B cell (primary cell): ENCODE measurements at regions of chr11 and their contacts with region 1.

Region 1: DNA sequence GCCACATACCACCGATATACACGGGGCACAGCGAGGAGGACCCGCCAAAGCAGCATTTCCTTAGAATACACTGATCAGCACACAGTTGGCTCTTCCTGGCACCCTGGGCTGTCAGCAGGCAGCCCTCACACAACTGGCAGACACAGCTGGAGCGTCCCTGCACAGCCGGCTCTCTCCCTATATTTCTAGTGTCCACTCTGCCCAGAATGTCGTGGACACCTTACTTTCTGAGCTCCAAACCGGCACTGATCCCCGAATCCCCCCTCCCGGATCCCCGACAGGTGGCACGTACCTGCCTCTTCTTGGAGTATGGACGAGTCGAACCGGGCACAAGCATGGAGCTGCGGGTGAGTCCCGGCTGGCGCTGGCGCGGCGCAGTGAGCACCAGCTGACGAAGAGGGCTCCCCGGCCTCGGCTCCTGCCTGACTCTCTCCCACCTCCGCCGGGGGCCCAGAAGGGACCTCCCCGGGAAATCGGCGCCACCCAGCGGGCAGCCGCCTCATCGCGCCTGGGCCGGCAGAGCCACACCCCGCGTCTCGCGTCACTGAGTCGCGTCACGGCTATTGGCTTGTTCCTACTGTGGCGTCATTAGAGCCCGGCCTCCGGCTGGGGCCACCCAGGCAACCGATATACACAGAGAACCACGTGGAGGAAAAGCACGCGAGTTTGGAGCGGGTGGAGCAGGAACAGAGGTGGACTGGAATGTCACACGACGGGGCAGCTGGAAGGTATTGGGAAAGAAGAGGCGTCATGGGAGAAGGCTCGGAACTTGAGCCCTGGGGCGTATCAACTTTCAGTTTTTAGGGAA is at the start of gene USP2:
- DNase-seq: peak; percentile 97
- ATAC-seq: peak; percentile 99
- H3K4me3 ChIP-seq: peak within 1 kb of the TSS; percentile 51 to 72 (median 55)
- H3K4me3 Mint-ChIP-seq: no peak within 1 kb of the TSS
- H3K27ac ChIP-seq: peak within 1 kb of the TSS in 1 of 2 donors; percentile 64
- H3K27ac Mint-ChIP-seq: peak within 1 kb of the TSS; percentile 79
- H3K4me1 ChIP-seq: peaks cover 12 to 17% of the 10 kb centered on the region in 2 donors
- H3K4me1 Mint-ChIP-seq: peaks cover 6% of the 10 kb centered on the region
- H3K27me3 ChIP-seq: peaks cover 0 to 27% (median 16%) of the 10 kb centered on the region in 4 experiments
- H3K27me3 Mint-ChIP-seq: peaks cover 5% of the 10 kb centered on the region
- CTCF ChIP-seq: peak; percentile 90
- total RNA-seq, gene USP2: not detected in 2 replicates

Region 2: DNA sequence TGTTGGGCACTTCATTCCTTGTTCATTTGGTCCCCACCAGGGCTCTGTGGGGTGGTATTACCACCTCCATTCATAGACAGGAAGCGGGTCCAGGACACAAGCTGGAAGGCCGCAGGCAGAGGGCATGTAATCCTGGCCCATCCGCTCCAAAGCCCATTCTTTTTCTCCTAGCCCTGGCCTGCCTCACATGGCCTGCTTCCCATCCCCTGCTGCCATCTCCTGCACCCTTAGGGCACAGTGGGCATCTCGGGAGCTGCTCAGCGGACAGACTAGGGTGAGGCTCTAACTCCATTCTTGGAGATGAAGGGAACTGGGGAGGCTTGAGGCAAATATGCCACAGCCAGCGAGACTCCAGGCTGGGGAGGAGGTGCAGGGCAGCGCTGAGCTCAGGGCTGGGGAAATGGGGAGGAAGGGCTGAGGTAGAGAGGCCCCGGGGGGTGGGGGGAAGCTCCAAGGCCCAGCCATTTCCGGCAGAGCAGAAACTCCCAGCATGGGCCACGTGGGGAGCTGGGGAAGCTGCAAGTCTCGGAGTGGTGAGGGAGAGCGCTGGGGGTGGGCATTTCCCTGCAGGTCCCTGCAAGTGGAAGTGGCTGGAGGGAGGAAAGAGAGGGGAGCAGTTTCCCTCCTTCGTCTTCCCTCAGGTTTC is 441.3 kb before region 1 on chr11:
- CTCF ChIA-PET with region 1: no interaction called
- POLR2A ChIA-PET with region 1: no interaction called
- intact Hi-C with region 1: no loop called
- DNase-seq: peak; percentile 42
- ATAC-seq: peak; percentile 28
- H3K4me3 ChIP-seq: no peak overlapping the region
- H3K4me3 Mint-ChIP-seq: no peak overlapping the region
- H3K27ac ChIP-seq: no peak overlapping the region
- H3K27ac Mint-ChIP-seq: no peak overlapping the region
- H3K4me1 ChIP-seq: peaks cover 16 to 25% of the 10 kb centered on the region in 2 donors
- H3K4me1 Mint-ChIP-seq: peaks cover 32% of the 10 kb centered on the region
- H3K27me3 ChIP-seq: peaks cover 0 to 3% (median 0%) of the 10 kb centered on the region in 4 experiments
- H3K27me3 Mint-ChIP-seq: no peaks in the 10 kb centered on the region
- CTCF ChIP-seq: no peak

Region 3: DNA sequence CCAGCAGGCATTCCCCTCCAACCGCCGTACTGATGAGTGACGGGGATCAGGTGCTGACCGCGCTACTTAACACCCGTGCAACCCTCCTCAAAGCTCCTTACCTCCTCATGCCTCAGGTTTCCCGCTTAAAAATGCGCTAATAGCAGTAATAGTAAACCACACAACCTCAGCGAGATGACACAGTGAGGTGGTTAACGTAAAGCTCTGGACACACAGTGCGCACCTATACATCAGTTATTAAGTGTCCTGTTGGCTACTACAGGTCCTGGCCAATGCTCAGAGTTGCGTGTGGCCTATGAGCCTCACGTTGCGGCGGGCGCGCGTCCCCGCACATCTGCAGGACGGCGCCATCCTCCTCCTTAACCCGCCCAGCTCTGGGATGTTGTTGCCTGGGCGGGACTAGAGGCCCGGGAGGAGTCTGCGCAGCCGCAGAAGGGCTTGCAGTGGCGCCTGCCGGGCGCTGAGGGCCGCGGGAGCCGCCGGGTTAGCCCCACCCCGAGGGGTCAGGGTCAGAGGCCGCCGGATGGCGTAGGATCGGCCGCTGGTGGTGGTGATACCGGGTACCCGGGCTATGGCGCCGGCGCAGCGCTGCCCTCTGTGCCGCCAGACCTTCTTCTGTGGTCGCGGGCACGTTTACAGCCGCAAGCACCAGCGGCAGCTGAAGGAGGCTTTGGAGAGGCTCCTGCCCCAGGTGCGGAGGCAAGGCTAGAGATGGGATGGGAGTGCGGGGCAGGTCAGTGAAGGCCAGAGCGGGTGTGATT is 383.6 kb before region 1 on chr11 and contains the start of gene CENATAC:
- CTCF ChIA-PET with region 1: no interaction called
- POLR2A ChIA-PET with region 1: no interaction called
- intact Hi-C with region 1: no loop called
- DNase-seq: peak; percentile 94
- ATAC-seq: peak; percentile 95
- H3K4me3 ChIP-seq: peak within 1 kb of the TSS; percentile 76 to 90 (median 82)
- H3K4me3 Mint-ChIP-seq: peak within 1 kb of the TSS; percentile 99
- H3K27ac ChIP-seq: peak within 1 kb of the TSS; percentile 52 to 77
- H3K27ac Mint-ChIP-seq: peak within 1 kb of the TSS; percentile 94
- H3K4me1 ChIP-seq: peaks cover 17 to 22% of the 10 kb centered on the region in 2 donors
- H3K4me1 Mint-ChIP-seq: peaks cover 35% of the 10 kb centered on the region
- H3K27me3 ChIP-seq: no peaks in the 10 kb centered on the region
- H3K27me3 Mint-ChIP-seq: no peaks in the 10 kb centered on the region
- CTCF ChIP-seq: no peak
- total RNA-seq, gene CENATAC: 122 and 138 TPM in 2 replicates

Region 4: DNA sequence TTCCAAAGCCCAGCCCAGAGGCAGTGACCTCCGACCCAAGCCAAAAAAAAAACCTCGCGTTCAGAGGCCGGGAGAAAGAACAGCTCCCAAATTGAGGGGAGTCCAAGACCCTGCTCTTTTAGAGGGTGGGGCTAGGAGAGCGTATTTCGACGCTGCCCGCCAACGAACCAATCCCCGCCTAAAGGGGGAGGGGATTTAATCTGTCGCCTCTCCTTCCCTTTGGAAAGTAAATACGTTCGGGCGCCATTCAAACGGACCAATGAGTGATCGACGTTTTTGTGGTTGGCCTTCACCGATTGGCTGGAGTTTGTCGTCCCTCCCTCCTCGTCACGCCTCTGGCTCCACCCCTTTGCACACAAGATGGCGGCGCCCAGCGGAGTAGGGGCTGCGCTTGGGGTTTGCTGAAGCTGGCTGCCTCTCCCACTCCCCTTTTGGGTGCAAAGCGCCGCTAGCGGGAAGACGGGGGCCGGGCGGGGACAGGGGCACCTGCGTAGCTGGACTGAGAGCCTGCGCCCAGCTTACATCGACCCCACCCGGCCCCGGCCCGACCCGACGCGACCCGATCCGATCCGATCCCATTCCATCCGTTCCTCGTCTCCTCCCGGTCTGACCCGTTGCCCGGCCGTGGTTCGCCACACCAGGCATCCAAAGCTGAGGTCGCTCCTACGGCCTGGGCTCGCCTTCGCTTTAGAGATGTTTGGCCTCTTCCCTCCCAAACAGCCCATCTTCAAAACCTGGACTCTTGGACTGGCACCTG is 47.0 kb before region 1 on chr11 and contains the start of gene RNF26:
- CTCF ChIA-PET with region 1: interaction called, 6 read pairs
- POLR2A ChIA-PET with region 1: no interaction called
- intact Hi-C with region 1: loop called (anchors 1 kb)
- DNase-seq: peak; percentile 96
- ATAC-seq: peak; percentile 98
- H3K4me3 ChIP-seq: peak within 1 kb of the TSS; percentile 74 to 94 (median 88)
- H3K4me3 Mint-ChIP-seq: peak within 1 kb of the TSS; percentile 99
- H3K27ac ChIP-seq: peak within 1 kb of the TSS; percentile 59 to 83
- H3K27ac Mint-ChIP-seq: peak within 1 kb of the TSS; percentile 95
- H3K4me1 ChIP-seq: peaks cover 10 to 19% of the 10 kb centered on the region in 2 donors
- H3K4me1 Mint-ChIP-seq: peaks cover 27% of the 10 kb centered on the region
- H3K27me3 ChIP-seq: peaks cover 0 to 11% (median 7%) of the 10 kb centered on the region in 4 experiments
- H3K27me3 Mint-ChIP-seq: peaks cover 16% of the 10 kb centered on the region
- CTCF ChIP-seq: no peak
- total RNA-seq, gene RNF26: 21.3 and 21.8 TPM in 2 replicates

Region 5: DNA sequence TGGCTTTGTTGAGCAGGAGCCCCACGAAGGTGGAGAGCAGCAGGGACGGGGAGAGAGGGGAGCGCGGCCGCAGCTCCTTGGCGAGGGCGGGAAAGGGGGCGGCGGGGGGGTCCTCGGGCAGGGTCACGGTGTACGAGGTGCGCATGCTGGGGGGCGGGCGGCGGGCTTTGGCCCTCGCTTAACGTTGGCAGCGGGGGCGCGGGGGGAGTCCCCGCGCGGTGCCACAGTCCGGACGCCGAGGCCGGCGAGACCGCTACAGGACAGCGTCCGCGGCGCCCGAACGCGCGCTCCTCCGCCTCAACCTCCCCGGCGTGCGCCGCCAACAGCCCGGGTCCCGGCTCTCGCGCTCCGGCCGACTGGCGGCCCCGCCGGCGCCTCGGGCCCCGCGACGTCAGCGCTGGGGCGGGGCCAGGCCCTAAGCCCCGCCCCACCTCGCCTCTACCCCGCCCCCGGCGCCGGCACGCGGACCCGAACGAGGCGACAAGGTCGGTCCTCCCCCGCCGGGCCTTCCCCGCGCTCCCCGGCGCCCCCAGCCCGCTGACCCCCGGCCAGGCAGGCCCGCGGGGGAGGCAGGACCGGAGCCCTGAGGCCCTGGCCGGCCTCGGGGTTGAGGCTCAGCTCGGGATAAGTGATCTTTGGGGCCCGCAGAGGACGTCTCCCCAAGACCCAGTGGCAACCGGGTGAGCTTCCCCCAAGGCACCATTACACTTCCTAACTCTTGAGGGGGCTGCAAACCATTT is 17.4 kb before region 1 on chr11:
- CTCF ChIA-PET with region 1: interaction called, 8 read pairs
- POLR2A ChIA-PET with region 1: no interaction called
- intact Hi-C with region 1: loop called (anchors 1 kb)
- DNase-seq: peak; percentile 71
- ATAC-seq: peak; percentile 92
- H3K4me3 ChIP-seq: peak overlapping the region in 3 of 5 experiments; percentile 36 to 58 (median 44)
- H3K4me3 Mint-ChIP-seq: peak overlapping the region; percentile 89
- H3K27ac ChIP-seq: no peak overlapping the region
- H3K27ac Mint-ChIP-seq: no peak overlapping the region
- H3K4me1 ChIP-seq: peaks cover 19 to 21% of the 10 kb centered on the region in 2 donors
- H3K4me1 Mint-ChIP-seq: peaks cover 17% of the 10 kb centered on the region
- H3K27me3 ChIP-seq: peaks cover 0 to 53% (median 27%) of the 10 kb centered on the region in 4 experiments
- H3K27me3 Mint-ChIP-seq: peaks cover 54% of the 10 kb centered on the region
- CTCF ChIP-seq: no peak